ENCODE measurements at regions of chrX and their contacts with region 1.

Region 1: GRCh38 chrX:120452131-120452530 is 17.0 kb downstream of the LAMP2 start:
- DNase-seq: peak in 6 of 9 donors; percentile 8 to 34 (median 28)
- ATAC-seq: peak; percentile 58
- H3K4me3 ChIP-seq: no peak overlapping the region
- H3K4me3 Mint-ChIP-seq: no peak overlapping the region
- H3K27ac ChIP-seq: no peak overlapping the region
- H3K27ac Mint-ChIP-seq: peak overlapping the region in 3 of 9 donors; percentile 5 to 73 (median 54)
- H3K4me1 ChIP-seq: peaks cover 5 to 7% of the 10 kb centered on the region in 2 donors
- H3K4me1 Mint-ChIP-seq: peaks cover 12 to 32% (median 30%) of the 10 kb centered on the region in 7 donors
- H3K27me3 ChIP-seq: no peaks in the 10 kb centered on the region
- H3K27me3 Mint-ChIP-seq: no peaks in the 10 kb centered on the region

Region 2: DNA sequence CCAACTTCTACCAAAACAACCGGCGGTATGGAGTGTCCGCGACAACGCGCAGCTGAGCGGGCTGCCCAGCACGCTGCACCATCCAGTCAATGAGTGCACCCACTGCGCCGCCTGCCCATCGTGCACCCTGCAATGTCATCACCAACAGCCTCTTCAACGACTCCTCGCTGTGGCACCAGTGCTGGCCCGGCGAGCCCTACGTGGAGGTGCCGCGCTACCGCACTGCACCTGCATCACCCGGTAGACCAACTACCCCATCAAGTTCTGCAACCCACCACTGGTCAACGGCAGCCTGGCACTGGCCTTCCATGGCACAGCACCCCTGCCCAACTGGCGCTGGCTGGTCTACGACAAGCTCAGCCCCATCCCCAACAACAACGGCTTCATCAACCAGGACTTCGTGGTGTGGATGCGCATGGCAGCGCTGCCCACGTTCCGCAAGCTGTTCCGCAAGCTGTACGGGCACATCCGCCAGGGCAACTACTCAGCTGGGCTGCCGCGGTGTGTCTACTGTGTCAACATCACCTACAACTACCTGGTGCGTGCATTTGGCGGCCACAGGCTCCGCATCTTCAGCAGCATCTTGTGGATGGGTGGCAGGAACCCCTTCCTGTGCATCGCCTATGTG is 1681.9 kb before region 1 on chrX:
- CTCF ChIA-PET with region 1: no interaction called
- POLR2A ChIA-PET with region 1: no interaction called
- intact Hi-C with region 1: no loop called
- DNase-seq: no peak
- ATAC-seq: no peak
- H3K4me3 ChIP-seq: no peak overlapping the region
- H3K4me3 Mint-ChIP-seq: no peak overlapping the region
- H3K27ac ChIP-seq: no peak overlapping the region
- H3K27ac Mint-ChIP-seq: no peak overlapping the region
- H3K4me1 ChIP-seq: no peaks in the 10 kb centered on the region
- H3K4me1 Mint-ChIP-seq: no peaks in the 10 kb centered on the region
- H3K27me3 ChIP-seq: no peaks in the 10 kb centered on the region
- H3K27me3 Mint-ChIP-seq: peaks cover 0 to 11% (median 5%) of the 10 kb centered on the region in 5 donors

Region 3: GRCh38 chrX:120316589-120317283 is 135.4 kb before region 1 on chrX:
- CTCF ChIA-PET with region 1: interaction called, 9 read pairs
- POLR2A ChIA-PET with region 1: interaction called, 6 read pairs
- intact Hi-C with region 1: loop called in 1 of 2 experiments (anchors 1 kb)
- DNase-seq: no peak
- ATAC-seq: no peak
- H3K4me3 ChIP-seq: no peak overlapping the region
- H3K4me3 Mint-ChIP-seq: no peak overlapping the region
- H3K27ac ChIP-seq: no peak overlapping the region
- H3K27ac Mint-ChIP-seq: no peak overlapping the region
- H3K4me1 ChIP-seq: no peaks in the 10 kb centered on the region
- H3K4me1 Mint-ChIP-seq: peaks cover 0 to 3% (median 0%) of the 10 kb centered on the region in 7 donors
- H3K27me3 ChIP-seq: no peaks in the 10 kb centered on the region
- H3K27me3 Mint-ChIP-seq: peaks cover 5 to 58% (median 28%) of the 10 kb centered on the region in 5 donors

Region 4: GRCh38 chrX:120380699-120381098 is 71.4 kb before region 1 on chrX:
- CTCF ChIA-PET with region 1: interaction called, 36 read pairs
- POLR2A ChIA-PET with region 1: no interaction called
- intact Hi-C with region 1: loop called (anchors 1 kb)
- DNase-seq: peak in 7 of 9 donors; percentile 13 to 66 (median 54)
- ATAC-seq: peak; percentile 80
- H3K4me3 ChIP-seq: no peak overlapping the region
- H3K4me3 Mint-ChIP-seq: no peak overlapping the region
- H3K27ac ChIP-seq: no peak overlapping the region
- H3K27ac Mint-ChIP-seq: peak overlapping the region in 2 of 9 donors; percentile 23 to 57
- H3K4me1 ChIP-seq: peaks cover 0 to 4% of the 10 kb centered on the region in 2 donors
- H3K4me1 Mint-ChIP-seq: peaks cover 0 to 6% (median 4%) of the 10 kb centered on the region in 7 donors
- H3K27me3 ChIP-seq: no peaks in the 10 kb centered on the region
- H3K27me3 Mint-ChIP-seq: peaks cover 0 to 12% (median 4%) of the 10 kb centered on the region in 5 donors

Region 5: DNA sequence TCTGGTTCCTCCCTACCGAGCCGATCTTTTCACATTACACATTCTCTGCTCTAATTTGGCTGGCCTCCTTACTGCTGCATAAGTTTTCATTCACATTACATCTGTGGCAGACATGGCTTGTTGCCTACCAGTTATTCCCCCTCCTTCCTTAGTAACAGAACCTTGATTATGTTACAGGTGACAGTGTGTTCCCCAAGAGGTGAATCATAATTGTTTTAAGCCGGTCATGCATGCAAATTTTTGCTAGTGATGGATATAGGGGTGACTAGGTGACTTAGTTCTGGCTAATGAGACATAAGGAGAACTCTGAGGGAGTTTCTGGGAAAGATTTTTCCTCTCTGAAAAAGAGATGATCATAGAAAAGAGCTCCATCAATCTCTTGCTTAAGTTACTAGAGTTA is 25.3 kb after region 1 on chrX:
- CTCF ChIA-PET with region 1: interaction called, 7 read pairs
- POLR2A ChIA-PET with region 1: no interaction called
- intact Hi-C with region 1: loop called in 1 of 2 experiments (anchors 1 kb)
- DNase-seq: no peak
- ATAC-seq: no peak
- H3K4me3 ChIP-seq: no peak overlapping the region
- H3K4me3 Mint-ChIP-seq: no peak overlapping the region
- H3K27ac ChIP-seq: no peak overlapping the region
- H3K27ac Mint-ChIP-seq: no peak overlapping the region
- H3K4me1 ChIP-seq: no peaks in the 10 kb centered on the region
- H3K4me1 Mint-ChIP-seq: peaks cover 0 to 5% (median 0%) of the 10 kb centered on the region in 7 donors
- H3K27me3 ChIP-seq: no peaks in the 10 kb centered on the region
- H3K27me3 Mint-ChIP-seq: no peaks in the 10 kb centered on the region

Measured in naive thymus-derived CD4-positive, alpha-beta T cell (primary cell).